ENCODE measurements at regions of chr17 and their contacts with region 1.

Region 1: GRCh38 chr17:78736526-78737079 is 45.5 kb downstream of the CYTH1 start:
- DNase-seq: peak; percentile 68
- ATAC-seq: peak; percentile 85
- H3K4me3 Mint-ChIP-seq: peak overlapping the region; percentile 88
- H3K27ac Mint-ChIP-seq: peak overlapping the region; percentile 91
- H3K4me1 Mint-ChIP-seq: peaks cover 70% of the 10 kb centered on the region
- H3K27me3 Mint-ChIP-seq: no peaks in the 10 kb centered on the region

Region 2: DNA sequence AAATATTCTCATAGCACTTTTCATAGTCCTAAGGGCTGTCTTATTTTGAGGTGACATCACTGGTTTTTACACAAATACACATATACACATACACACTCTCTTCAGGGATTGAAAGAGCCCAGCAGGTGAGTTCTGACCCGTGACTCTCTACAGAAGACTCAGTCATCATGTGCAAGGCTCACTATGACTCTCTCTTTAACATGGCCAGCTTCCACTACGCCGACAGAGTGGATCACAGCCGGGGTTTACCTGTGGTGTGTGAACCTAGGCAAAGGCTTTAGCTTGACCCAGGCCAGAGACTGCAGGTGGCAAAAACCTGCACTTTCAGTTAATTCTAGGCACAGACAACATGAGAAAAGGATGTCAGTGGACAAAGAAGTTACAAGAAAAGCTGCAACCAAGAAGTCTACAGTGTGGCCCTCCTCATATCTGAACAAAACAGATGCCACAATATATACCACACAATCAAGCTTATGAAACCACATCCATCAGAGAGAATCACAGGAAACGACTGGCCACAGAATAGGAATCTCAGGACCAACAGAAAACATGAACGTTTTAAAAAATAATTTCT is 11.1 kb before region 1 on chr17:
- POLR2A ChIA-PET with region 1: interaction called, 21 read pairs
- DNase-seq: no peak
- ATAC-seq: peak; percentile 72
- H3K4me3 Mint-ChIP-seq: peak overlapping the region; percentile 76
- H3K27ac Mint-ChIP-seq: peak overlapping the region; percentile 87
- H3K4me1 Mint-ChIP-seq: peaks cover 68% of the 10 kb centered on the region
- H3K27me3 Mint-ChIP-seq: no peaks in the 10 kb centered on the region